ENCODE measurements at regions of chr7 and their contacts with region 1.

Region 1: DNA sequence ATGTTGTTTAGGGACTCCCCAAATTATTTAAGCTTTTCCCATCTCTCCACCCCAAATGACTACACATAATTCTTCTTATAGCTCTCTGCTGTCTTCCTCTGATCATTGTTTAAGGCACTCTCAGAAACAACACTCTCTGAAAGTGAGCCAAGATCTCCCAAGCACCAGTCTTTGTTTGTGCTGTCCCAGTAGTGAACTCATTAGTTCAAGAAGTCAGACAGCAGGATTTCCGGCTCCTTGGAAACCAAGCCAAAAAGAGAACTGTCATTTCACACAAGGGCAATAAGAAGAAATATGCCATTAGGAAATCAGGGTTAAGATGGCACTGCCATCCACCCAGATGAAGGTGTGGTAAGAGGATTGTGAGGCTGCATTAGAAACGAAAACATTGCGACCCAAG is 83.1 kb downstream of the FZD1 start:
- DNase-seq: peak; percentile 93
- H3K4me3 ChIP-seq: no peak overlapping the region
- H3K27ac ChIP-seq: peak overlapping the region; percentile 73
- H3K4me1 ChIP-seq: peaks cover 55% of the 10 kb centered on the region
- H3K27me3 ChIP-seq: no peaks in the 10 kb centered on the region
- CTCF ChIP-seq: no peak
- POLR2A ChIP-seq: no peak

Region 2: DNA sequence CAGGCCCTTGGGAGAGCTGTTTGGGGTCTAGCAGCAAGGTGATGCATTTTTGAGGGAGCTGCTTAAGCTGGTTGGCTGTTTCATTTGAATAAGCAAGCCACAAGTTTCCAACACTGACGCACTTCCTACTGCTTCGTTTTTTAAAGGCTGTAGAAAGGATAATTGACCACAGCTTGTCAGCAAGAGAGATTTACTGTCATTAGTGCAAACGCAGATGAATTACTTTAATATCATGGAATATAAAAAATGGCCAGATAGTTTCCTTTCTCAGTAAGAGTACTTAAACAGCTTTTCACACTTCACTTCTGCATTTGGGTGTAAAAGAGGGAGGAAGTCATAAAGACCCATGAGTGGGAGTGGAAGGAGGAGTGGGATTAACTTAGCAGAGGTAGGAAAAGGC is 21.6 kb before region 1 on chr7:
- CTCF ChIA-PET with region 1: interaction called, 3 read pairs
- POLR2A ChIA-PET with region 1: no interaction called
- dilution Hi-C with region 1: no loop called
- intact Hi-C with region 1: loop called (anchors 1 kb)
- DNase-seq: no peak
- H3K4me3 ChIP-seq: no peak overlapping the region
- H3K27ac ChIP-seq: no peak overlapping the region
- H3K4me1 ChIP-seq: peaks cover 6% of the 10 kb centered on the region
- H3K27me3 ChIP-seq: no peaks in the 10 kb centered on the region
- CTCF ChIP-seq: no peak
- POLR2A ChIP-seq: no peak

Region 3: DNA sequence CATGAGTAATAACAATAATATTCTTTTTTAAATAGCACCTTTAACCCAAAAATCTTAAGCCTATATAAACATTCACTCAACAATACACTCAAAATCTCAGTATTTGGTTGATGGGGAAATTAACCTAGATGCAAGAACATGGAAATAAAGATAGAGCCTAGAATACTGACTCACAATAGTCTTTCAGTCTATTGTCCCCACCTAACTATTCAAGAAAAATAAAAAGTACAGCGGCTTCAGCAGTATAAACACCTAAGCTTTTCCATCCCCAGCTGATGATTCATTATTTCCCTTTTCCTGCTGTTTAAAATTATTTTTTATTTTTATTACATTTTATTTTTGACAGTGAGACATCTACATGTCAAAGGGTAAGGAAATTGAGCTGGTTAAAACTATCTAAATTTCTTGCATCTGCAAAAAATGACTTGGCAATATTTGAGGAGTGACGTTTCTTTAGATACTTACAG is 118.3 kb after region 1 on chr7:
- CTCF ChIA-PET with region 1: interaction called, 7 read pairs
- POLR2A ChIA-PET with region 1: no interaction called
- dilution Hi-C with region 1: no loop called
- intact Hi-C with region 1: loop called (anchors 1 kb)
- DNase-seq: peak; percentile 93
- H3K4me3 ChIP-seq: no peak overlapping the region
- H3K27ac ChIP-seq: peak overlapping the region; percentile 75
- H3K4me1 ChIP-seq: peaks cover 25% of the 10 kb centered on the region
- H3K27me3 ChIP-seq: no peaks in the 10 kb centered on the region
- CTCF ChIP-seq: no peak
- POLR2A ChIP-seq: no peak

Region 4: DNA sequence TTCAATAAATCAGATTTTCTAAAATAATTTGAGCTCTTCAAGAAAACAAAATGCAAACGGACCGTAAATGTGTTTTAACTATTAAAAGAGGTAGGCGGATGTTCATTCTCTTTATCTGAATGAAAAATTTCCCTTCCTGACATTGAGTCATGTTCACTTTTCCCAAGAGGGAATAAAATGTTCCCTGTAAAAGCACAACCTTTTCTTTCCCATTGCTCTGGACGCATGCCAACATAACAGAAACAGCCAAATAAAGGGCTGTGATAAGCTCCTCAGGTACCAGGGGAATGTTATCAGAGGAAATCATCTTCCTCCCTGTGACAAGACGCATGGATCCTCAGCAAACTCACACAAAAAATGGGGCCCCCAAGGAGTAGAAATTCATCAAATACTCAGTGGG is 281.5 kb after region 1 on chr7:
- CTCF ChIA-PET with region 1: no interaction called
- POLR2A ChIA-PET with region 1: no interaction called
- dilution Hi-C with region 1: no loop called
- intact Hi-C with region 1: loop called (anchors 1 kb)
- DNase-seq: peak; percentile 77
- H3K4me3 ChIP-seq: no peak overlapping the region
- H3K27ac ChIP-seq: peak overlapping the region; percentile 41
- H3K4me1 ChIP-seq: peaks cover 22% of the 10 kb centered on the region
- H3K27me3 ChIP-seq: no peaks in the 10 kb centered on the region
- CTCF ChIP-seq: no peak
- POLR2A ChIP-seq: no peak